HepG2 (cell line): ENCODE measurements at regions of chr10 and their contacts with region 1.

Region 1: DNA sequence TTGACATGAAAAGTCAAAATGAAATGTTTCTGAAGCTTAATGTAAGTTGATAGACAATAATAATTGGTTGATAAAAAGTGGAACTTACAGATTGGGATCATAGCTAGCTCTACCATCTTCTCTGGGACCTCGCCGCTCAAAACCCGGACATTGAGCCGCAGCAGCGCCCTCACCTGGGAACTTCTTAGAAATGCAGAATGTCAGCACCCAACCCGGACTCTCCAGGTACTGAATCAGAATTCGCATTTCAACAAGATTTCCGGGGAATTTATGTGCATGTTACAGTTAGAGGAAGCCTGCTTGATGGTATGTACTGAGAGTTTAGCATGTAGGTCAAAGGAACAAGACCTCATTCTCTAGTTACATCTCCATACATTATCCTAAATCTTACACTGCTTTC is 36.7 kb upstream of the ABLIM1 start:
- DNase-seq: peak; percentile 35
- ATAC-seq: peak; percentile 75
- H3K4me3 ChIP-seq: no peak overlapping the region
- H3K27ac ChIP-seq: no peak overlapping the region
- H3K4me1 ChIP-seq: no peaks in the 10 kb centered on the region
- H3K27me3 ChIP-seq: no peaks in the 10 kb centered on the region; a peak in 1 of 5 replicates
- CTCF ChIP-seq: peak; percentile 82
- EP300 ChIP-seq: no peak
- POLR2A ChIP-seq: no peak
- RAD21 ChIP-seq: peak; percentile 74

Region 2: GRCh38 chr10:114631666-114632417 is 62.9 kb before region 1 on chr10:
- CTCF ChIA-PET with region 1: no interaction called
- POLR2A ChIA-PET with region 1: no interaction called
- in situ Hi-C with region 1: no loop called
- intact Hi-C with region 1: loop called (anchors 5 kb)
- DNase-seq: peak; percentile 76
- ATAC-seq: peak; percentile 95
- H3K4me3 ChIP-seq: peak overlapping the region; percentile 62 to 71 (median 64)
- H3K27ac ChIP-seq: peak overlapping the region; percentile 10
- H3K4me1 ChIP-seq: peaks cover 50% of the 10 kb centered on the region
- H3K27me3 ChIP-seq: peaks cover 0 to 15% of the 10 kb centered on the region in 2 experiments; a peak in 2 of 5 replicates
- CTCF ChIP-seq: peak; percentile 18; the same call in 1 of the 2 replicates
- EP300 ChIP-seq: no peak
- POLR2A ChIP-seq: no peak
- RAD21 ChIP-seq: no peak

Region 3: DNA sequence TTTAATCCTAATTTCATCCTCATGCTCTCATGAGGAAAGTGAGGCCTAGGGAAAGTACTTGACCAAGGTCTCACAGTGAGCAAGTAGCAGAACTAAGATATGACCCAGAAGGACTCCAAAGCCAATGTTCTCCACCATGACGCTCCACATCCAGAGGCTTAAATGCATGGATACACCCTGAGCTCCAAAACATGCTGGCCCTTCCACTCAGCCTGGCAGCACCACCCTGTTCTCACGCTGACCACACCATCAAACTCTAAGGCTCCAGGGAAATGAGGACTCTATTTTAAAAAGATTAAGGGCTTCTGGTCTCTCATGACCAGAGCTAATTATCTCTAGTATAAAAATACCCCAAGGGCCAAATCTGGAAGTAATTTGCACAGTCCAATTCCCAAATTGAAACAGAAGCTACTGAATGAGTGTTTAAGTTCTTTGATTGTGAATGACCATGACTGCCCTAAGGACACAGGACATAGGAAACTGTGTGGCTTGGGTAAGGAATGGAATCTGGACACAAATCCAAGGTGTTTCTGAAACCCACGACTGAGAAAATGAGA is 34.4 kb after region 1 on chr10:
- CTCF ChIA-PET with region 1: no interaction called
- POLR2A ChIA-PET with region 1: no interaction called
- in situ Hi-C with region 1: no loop called
- intact Hi-C with region 1: no loop called
- DNase-seq: no peak
- ATAC-seq: no peak
- H3K4me3 ChIP-seq: no peak overlapping the region
- H3K27ac ChIP-seq: no peak overlapping the region
- H3K4me1 ChIP-seq: peaks cover 7% of the 10 kb centered on the region; the same call in 1 of the 2 replicates
- H3K27me3 ChIP-seq: no peaks in the 10 kb centered on the region
- CTCF ChIP-seq: no peak
- EP300 ChIP-seq: no peak
- POLR2A ChIP-seq: no peak
- RAD21 ChIP-seq: no peak

Region 4: GRCh38 chr10:114791768-114792167 is 97.0 kb after region 1 on chr10:
- CTCF ChIA-PET with region 1: no interaction called
- POLR2A ChIA-PET with region 1: no interaction called
- in situ Hi-C with region 1: no loop called
- intact Hi-C with region 1: loop called (anchors 5 kb)
- DNase-seq: no peak
- ATAC-seq: no peak
- H3K4me3 ChIP-seq: no peak overlapping the region
- H3K27ac ChIP-seq: no peak overlapping the region
- H3K4me1 ChIP-seq: no peaks in the 10 kb centered on the region
- H3K27me3 ChIP-seq: no peaks in the 10 kb centered on the region
- CTCF ChIP-seq: no peak
- EP300 ChIP-seq: no peak
- POLR2A ChIP-seq: no peak
- RAD21 ChIP-seq: no peak